ENCODE measurements at regions of chr7 and their contacts with region 1.

Region 1: GRCh38 chr7:32846701-32847100 is 44.9 kb downstream of the KBTBD2 start:
- DNase-seq: peak; percentile 89
- H3K4me3 Mint-ChIP-seq: no peak overlapping the region
- H3K27ac Mint-ChIP-seq: no peak overlapping the region
- H3K4me1 Mint-ChIP-seq: peaks cover 14% of the 10 kb centered on the region
- H3K27me3 Mint-ChIP-seq: peaks cover 23% of the 10 kb centered on the region

Region 2: DNA sequence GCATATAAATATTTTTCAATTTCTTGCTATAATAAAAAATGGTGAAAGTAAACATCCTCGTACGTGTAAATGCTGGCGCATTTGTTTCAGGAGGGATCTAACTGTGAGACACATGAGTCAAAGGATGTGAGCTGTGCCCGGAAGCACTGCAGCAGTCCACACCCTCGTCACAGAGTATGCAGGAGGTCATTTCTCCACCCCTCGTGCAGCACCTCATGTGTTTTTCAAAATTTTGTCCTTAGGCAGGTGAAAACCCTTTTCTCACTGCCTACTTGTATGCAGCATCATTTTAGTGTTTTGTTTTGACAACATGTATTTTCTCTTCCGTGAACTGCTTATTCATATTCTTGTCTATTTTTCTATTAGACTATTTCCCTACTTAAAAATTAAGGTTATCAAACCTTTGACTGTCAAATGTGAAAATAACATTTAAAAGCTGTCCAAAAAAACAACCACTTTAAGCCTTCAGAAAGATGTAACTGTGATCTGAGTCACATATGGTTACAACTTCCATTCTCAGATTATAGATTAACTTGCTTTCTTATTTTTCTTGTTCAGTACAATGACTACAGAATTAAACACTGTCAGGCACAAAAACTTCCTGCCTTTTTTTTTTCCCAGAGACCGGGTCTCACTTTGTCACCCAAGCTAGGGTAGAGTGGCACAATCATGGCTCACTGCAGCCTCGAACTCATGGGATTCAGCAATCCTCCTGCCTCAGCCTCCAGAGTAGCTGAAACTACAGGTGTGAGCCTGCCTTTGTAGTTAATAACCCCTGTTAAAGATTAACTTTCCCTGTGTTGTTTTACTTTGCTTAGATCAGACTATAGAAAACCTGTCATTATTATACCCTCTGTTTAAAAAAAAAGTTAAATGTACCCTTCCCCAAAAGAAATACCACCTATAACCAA is 188.4 kb before region 1 on chr7:
- CTCF ChIA-PET with region 1: no interaction called
- POLR2A ChIA-PET with region 1: no interaction called
- DNase-seq: no peak
- H3K4me3 Mint-ChIP-seq: no peak overlapping the region
- H3K27ac Mint-ChIP-seq: no peak overlapping the region
- H3K4me1 Mint-ChIP-seq: no peaks in the 10 kb centered on the region
- H3K27me3 Mint-ChIP-seq: peaks cover 14% of the 10 kb centered on the region

Region 3: GRCh38 chr7:32809871-32810270 is 36.8 kb before region 1 on chr7:
- CTCF ChIA-PET with region 1: no interaction called
- POLR2A ChIA-PET with region 1: no interaction called
- DNase-seq: no peak
- H3K4me3 Mint-ChIP-seq: no peak overlapping the region
- H3K27ac Mint-ChIP-seq: no peak overlapping the region
- H3K4me1 Mint-ChIP-seq: no peaks in the 10 kb centered on the region
- H3K27me3 Mint-ChIP-seq: peaks cover 3% of the 10 kb centered on the region

Region 4: DNA sequence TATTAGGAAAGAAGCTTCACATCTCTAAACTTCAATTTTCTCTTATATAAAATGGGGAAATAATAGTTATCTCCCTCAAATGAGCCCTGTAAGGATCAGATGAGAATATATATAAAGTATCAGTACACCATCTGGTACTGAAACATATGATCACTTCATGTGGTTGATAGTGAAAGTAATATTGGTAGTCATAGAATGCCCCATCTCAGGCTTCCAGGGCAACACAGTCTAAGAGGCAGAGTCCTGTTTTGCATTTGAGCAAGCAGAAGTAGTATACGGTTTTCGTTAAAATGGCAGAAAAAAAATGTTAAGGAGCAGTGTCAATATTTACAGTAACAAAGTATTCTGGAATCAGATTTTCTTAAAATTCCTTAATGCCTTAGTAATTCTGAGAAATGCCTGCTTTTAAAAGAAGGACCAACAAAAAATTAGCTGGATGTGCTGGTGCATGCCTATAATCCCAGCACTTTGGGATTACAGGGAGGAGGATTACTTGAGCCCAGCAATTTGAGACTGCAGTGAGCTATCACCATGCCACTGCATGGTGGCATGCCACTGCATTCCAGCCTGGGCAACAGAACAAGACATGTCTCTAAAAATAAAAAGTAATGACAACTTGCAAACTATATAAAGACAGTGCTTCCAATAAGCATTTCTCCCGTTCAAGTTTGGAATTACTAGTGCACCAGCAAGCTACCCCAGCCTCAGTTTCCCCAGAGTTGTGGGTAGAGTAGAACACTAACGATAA is 25.1 kb after region 1 on chr7:
- CTCF ChIA-PET with region 1: interaction called, 30 read pairs
- POLR2A ChIA-PET with region 1: no interaction called
- DNase-seq: no peak
- H3K4me3 Mint-ChIP-seq: no peak overlapping the region
- H3K27ac Mint-ChIP-seq: no peak overlapping the region
- H3K4me1 Mint-ChIP-seq: peaks cover 19% of the 10 kb centered on the region
- H3K27me3 Mint-ChIP-seq: no peaks in the 10 kb centered on the region

Region 5: DNA sequence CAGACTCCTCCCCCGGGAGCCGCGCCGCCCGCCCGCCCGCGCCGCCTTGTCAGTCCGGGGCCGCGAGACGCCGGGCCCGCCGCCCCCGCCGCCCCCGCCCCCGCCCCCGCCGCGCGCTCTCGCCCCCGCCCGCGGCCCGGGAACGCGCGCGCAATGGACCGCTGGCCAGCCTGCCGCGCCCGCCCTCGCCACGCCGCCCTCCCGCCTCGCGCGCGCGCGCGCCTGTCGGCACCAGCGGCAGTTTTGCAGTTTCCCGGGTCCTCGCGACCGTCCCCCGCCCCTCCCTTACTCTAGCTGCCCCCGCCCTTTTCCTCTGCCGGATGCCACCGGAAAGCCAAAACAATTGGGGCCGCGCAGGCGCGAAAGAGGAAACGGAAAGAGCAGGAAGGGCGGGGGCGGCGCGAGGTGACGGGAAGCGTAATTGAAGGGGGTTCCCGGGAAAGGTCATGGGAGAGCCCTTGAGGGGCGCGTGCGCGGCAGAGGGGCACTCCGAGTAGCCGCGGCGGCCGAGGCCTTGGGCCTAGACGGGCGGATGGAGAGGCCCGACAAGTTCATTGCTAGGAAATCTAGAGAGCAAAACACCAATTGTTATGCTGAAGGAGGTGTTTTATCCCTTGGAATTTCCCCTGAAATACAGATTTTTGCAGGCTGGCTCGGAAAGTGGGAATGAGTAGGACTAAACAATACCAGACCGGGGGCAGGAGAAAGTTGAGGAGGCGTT is 45.3 kb after region 1 on chr7:
- CTCF ChIA-PET with region 1: interaction called, 29 read pairs
- POLR2A ChIA-PET with region 1: interaction called, 15 read pairs
- DNase-seq: peak; percentile 97
- H3K4me3 Mint-ChIP-seq: peak overlapping the region; percentile 79
- H3K27ac Mint-ChIP-seq: peak overlapping the region; percentile 92
- H3K4me1 Mint-ChIP-seq: peaks cover 49% of the 10 kb centered on the region
- H3K27me3 Mint-ChIP-seq: no peaks in the 10 kb centered on the region

Region 6: GRCh38 chr7:32937344-32938174 is 90.9 kb after region 1 on chr7:
- CTCF ChIA-PET with region 1: interaction called, 67 read pairs
- POLR2A ChIA-PET with region 1: interaction called, 4 read pairs
- DNase-seq: no peak
- H3K4me3 Mint-ChIP-seq: no peak overlapping the region
- H3K27ac Mint-ChIP-seq: no peak overlapping the region
- H3K4me1 Mint-ChIP-seq: peaks cover 20% of the 10 kb centered on the region
- H3K27me3 Mint-ChIP-seq: no peaks in the 10 kb centered on the region

Region 7: DNA sequence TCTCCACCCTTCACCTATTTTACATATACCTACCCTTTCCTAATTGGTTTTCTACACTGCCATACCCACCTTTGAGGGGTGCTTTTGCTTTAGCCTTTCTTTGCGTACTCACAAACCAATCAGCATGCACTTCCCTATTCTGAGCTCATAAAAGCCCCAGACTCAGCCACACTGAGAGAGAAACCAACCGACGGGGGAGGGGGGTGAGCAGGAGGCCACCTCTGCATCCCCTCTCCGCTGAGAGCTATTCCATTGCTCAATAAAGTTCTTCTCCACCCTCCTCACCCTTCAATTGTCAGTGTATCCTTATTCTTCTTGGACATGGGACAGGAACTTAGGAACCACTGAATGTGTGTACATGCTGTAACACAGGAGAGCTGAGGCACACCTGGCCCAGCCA is 101.5 kb after region 1 on chr7:
- CTCF ChIA-PET with region 1: interaction called, 67 read pairs
- POLR2A ChIA-PET with region 1: interaction called, 5 read pairs
- DNase-seq: no peak
- H3K4me3 Mint-ChIP-seq: no peak overlapping the region
- H3K27ac Mint-ChIP-seq: no peak overlapping the region
- H3K4me1 Mint-ChIP-seq: no peaks in the 10 kb centered on the region
- H3K27me3 Mint-ChIP-seq: peaks cover 15% of the 10 kb centered on the region

Region 8: GRCh38 chr7:33040803-33041516 is 194.3 kb after region 1 on chr7:
- CTCF ChIA-PET with region 1: interaction called, 24 read pairs
- POLR2A ChIA-PET with region 1: no interaction called
- DNase-seq: peak; percentile 75
- H3K4me3 Mint-ChIP-seq: peak overlapping the region; percentile 83
- H3K27ac Mint-ChIP-seq: peak overlapping the region; percentile 81
- H3K4me1 Mint-ChIP-seq: peaks cover 45% of the 10 kb centered on the region
- H3K27me3 Mint-ChIP-seq: no peaks in the 10 kb centered on the region

Region 9: DNA sequence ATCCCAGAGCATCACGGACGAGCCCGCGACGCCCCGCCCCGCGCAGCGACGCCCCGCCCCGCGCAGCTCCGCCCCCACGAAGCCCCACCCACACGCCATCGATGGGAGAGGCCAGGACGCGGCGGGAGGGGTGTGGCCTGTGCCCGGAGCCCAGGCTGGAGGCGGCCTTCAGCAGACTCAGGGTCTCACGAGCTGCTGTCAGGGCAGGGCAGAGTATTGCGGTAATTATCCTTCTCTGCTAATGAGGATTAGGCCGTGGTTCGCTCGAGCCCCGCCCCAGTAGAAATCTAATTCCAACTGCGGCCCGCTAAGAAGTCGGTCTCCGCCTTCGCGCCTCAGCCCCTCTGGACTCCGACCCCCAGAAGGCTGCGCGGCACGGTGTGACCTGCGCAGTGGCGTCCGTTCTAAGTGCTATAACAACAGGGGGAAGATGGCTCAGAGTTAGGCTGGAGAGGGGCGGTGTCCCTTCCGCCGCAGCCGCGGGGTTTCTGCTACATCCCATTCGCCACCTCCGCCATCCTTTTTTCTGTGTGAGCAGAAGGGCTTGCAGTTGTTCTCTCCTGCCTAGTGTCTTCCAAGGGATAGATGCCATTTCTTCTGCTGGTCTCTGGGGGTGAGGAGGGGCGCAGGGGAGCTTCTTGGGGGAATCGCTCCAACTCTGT is 216.2 kb after region 1 on chr7:
- CTCF ChIA-PET with region 1: interaction called, 11 read pairs
- POLR2A ChIA-PET with region 1: no interaction called
- DNase-seq: peak; percentile 92
- H3K4me3 Mint-ChIP-seq: peak overlapping the region; percentile 78
- H3K27ac Mint-ChIP-seq: peak overlapping the region; percentile 78
- H3K4me1 Mint-ChIP-seq: peaks cover 38% of the 10 kb centered on the region
- H3K27me3 Mint-ChIP-seq: peaks cover 3% of the 10 kb centered on the region

Measured in activated CD4-positive, alpha-beta memory T cell treated with anti-CD3 and anti-CD28 coated beads, Interleukin-2, amount 10 ng/mL, durations not matched to agents 7 days and 5 days (primary cell).